ENCODE measurements at regions of chr10 and their contacts with region 1.

Region 1: GRCh38 chr10:129971381-129972144 is 7.5 kb upstream of the EBF3 start:
- DNase-seq: peak in 1 of 2 donors; percentile 73
- ATAC-seq: peak; percentile 82 to 91 (median 86)
- H3K4me3 ChIP-seq: peak overlapping the region in 9 of 10 donors; percentile 29 to 69 (median 51)
- H3K27ac ChIP-seq: no peak overlapping the region
- H3K4me1 ChIP-seq: peaks cover 0 to 42% (median 34%) of the 10 kb centered on the region in 9 donors
- H3K27me3 ChIP-seq: peaks cover 8 to 98% (median 83%) of the 10 kb centered on the region in 7 donors
- CTCF ChIP-seq: peak; percentile 38 to 84 (median 68)

Region 2: GRCh38 chr10:128211953-128212727 is 1759.4 kb before region 1 on chr10:
- intact Hi-C with region 1: loop called in 1 of 10 experiments (anchors 10 kb)
- DNase-seq: peak; percentile 73 to 85
- ATAC-seq: peak; percentile 83 to 93 (median 90)
- H3K4me3 ChIP-seq: peak overlapping the region in 5 of 10 donors; percentile 23 to 45 (median 32)
- H3K27ac ChIP-seq: no peak overlapping the region
- H3K4me1 ChIP-seq: peaks cover 0 to 19% (median 5%) of the 10 kb centered on the region in 9 donors
- H3K27me3 ChIP-seq: peaks cover 0 to 34% (median 0%) of the 10 kb centered on the region in 7 donors
- CTCF ChIP-seq: peak; percentile 87 to 98 (median 96)

Region 3: GRCh38 chr10:128540781-128541761 is 1430.5 kb before region 1 on chr10:
- intact Hi-C with region 1: loop called in 1 of 10 experiments (anchors 5 kb)
- DNase-seq: peak; percentile 7 to 23
- ATAC-seq: peak in 6 of 8 donors; percentile 36 to 71 (median 50)
- H3K4me3 ChIP-seq: peak overlapping the region in 9 of 10 donors; percentile 20 to 49 (median 27)
- H3K27ac ChIP-seq: peak overlapping the region in 6 of 10 donors; percentile 28 to 80 (median 66)
- H3K4me1 ChIP-seq: peaks cover 0 to 24% (median 7%) of the 10 kb centered on the region in 9 donors
- H3K27me3 ChIP-seq: peaks cover 0 to 66% (median 49%) of the 10 kb centered on the region in 7 donors
- CTCF ChIP-seq: peak in 6 of 9 donors; percentile 21 to 55 (median 38)

Region 4: GRCh38 chr10:129030996-129031843 is 940.3 kb before region 1 on chr10:
- intact Hi-C with region 1: loop called (anchors 1 to 5 kb)
- DNase-seq: peak; percentile 45 to 68
- ATAC-seq: peak; percentile 72 to 93 (median 92)
- H3K4me3 ChIP-seq: no peak overlapping the region
- H3K27ac ChIP-seq: no peak overlapping the region
- H3K4me1 ChIP-seq: peaks cover 0 to 20% (median 3%) of the 10 kb centered on the region in 9 donors
- H3K27me3 ChIP-seq: peaks cover 0 to 70% (median 22%) of the 10 kb centered on the region in 7 donors
- CTCF ChIP-seq: peak; percentile 82 to 97 (median 93)

Region 5: GRCh38 chr10:129466703-129467358 is 504.7 kb before region 1 on chr10 and contains the start of gene MGMT:
- intact Hi-C with region 1: loop called in 1 of 10 experiments (anchors 10 kb)
- DNase-seq: peak; percentile 94 to 98
- ATAC-seq: peak; percentile 95 to 99 (median 98)
- H3K4me3 ChIP-seq: peak within 1 kb of the TSS; percentile 61 to 96 (median 78)
- H3K27ac ChIP-seq: peak within 1 kb of the TSS; percentile 37 to 96 (median 86)
- H3K4me1 ChIP-seq: peaks cover 4 to 19% (median 15%) of the 10 kb centered on the region in 9 donors
- H3K27me3 ChIP-seq: no peaks in the 10 kb centered on the region
- CTCF ChIP-seq: no peak
- total RNA-seq, gene MGMT: 8.4 to 17.8 (median 12.9) TPM

Region 6: GRCh38 chr10:129888784-129889616 is 82.6 kb before region 1 on chr10:
- intact Hi-C with region 1: loop called in 5 of 10 experiments (anchors 2 to 10 kb)
- DNase-seq: peak; percentile 67 to 76
- ATAC-seq: peak; percentile 58 to 80 (median 74)
- H3K4me3 ChIP-seq: no peak overlapping the region
- H3K27ac ChIP-seq: peak overlapping the region in 3 of 10 donors; percentile 24 to 51 (median 44)
- H3K4me1 ChIP-seq: peaks cover 11 to 69% (median 37%) of the 10 kb centered on the region in 9 donors
- H3K27me3 ChIP-seq: no peaks in the 10 kb centered on the region
- CTCF ChIP-seq: peak; percentile 53 to 83 (median 74)

Region 7: DNA sequence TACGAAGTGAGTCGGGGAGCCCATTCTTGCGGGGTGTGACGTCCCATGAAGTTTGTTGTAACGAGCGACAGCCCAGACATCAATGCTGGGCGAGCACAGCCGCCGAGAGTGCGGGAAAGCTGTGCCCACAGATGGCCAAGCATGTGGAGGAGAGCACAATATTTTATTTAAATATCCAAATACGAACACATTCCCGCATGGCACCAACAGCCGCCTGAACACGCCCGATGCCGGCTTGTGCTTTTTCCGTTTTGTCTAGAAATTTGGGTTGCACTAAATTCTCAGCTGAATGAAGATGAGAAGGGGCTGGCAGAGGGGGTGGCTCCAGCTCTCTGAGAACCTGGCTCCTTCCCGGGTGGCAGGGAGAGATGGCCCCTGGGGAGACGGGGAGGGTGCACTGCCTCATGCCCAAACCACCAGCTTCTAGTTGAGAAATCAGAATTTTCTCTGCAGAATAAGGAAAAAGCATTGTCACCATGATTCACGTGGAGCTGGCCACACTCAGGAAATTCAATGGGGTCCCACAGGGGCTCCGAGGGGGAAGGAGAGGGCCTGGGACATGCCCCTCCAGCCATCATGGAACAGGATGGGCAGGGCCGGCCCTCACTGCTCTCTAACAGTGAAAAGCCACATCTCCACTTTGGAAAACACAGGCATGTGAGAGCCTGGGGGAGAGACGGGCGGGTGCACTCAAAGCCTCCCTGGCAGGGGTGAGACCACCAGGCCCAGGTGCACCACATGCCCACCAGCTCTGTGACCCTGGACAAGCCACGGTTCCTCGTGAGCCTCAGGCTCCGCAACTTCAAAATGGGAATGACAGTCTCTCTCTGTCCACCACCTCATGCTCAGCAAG is 55.8 kb before region 1 on chr10:
- intact Hi-C with region 1: no loop called
- DNase-seq: no peak
- ATAC-seq: no peak
- H3K4me3 ChIP-seq: no peak overlapping the region
- H3K27ac ChIP-seq: no peak overlapping the region
- H3K4me1 ChIP-seq: peaks cover 0 to 53% (median 13%) of the 10 kb centered on the region in 9 donors
- H3K27me3 ChIP-seq: no peaks in the 10 kb centered on the region
- CTCF ChIP-seq: no peak

Region 8: GRCh38 chr10:130127364-130128061 is 155.9 kb after region 1 on chr10:
- intact Hi-C with region 1: loop called in 1 of 10 experiments (anchors 10 kb)
- DNase-seq: peak in 1 of 2 donors; percentile 29
- ATAC-seq: peak in 7 of 8 donors; percentile 52 to 85 (median 80)
- H3K4me3 ChIP-seq: no peak overlapping the region
- H3K27ac ChIP-seq: no peak overlapping the region
- H3K4me1 ChIP-seq: peaks cover 0 to 12% (median 0%) of the 10 kb centered on the region in 9 donors
- H3K27me3 ChIP-seq: peaks cover 0 to 27% (median 12%) of the 10 kb centered on the region in 7 donors
- CTCF ChIP-seq: peak; percentile 45 to 81 (median 69)

Measured in heart right ventricle (tissue), 16 donors.